ENCODE measurements at regions of chr7 and their contacts with region 1.

Region 1: DNA sequence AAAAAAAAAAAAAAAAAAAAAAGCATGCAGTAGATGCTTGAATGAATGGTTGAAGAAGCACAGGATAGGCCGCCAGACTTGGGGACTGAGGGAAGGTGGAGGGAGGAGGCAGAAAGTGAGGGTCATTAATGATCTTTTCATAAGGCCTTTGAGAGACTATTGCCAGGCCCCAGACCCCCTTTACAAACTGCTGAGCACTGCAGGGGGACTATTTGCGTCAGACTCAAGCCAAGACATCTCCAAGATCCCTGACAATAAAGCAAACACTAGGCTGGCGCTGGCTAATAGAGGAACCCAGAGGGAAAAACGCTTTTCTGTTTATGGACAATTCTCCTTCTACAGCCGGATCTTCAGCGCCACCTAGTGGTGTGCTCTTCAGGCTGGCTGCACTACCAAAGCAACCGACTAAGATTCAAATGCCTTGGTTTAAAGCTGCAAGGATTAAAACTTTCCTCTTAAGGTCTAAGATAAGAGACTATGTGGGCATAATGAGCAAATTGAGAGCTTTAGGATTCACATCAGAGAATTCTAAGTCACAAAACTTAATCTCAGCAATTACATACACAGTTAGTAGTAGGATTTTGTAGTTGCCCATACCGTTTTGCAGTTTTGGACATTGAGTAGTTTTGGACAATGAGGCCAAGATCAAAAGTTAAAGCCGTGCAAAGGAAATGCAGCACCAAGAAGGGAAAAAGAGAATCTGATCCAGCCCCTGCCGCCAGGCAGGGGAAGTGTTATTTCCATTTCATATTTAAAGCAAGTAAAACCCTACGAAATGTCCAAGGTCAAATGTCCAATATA is 17.9 kb upstream of the AGK start:
- DNase-seq: peak; percentile 55
- H3K4me3 ChIP-seq: no peak overlapping the region
- H3K27ac ChIP-seq: no peak overlapping the region
- H3K27me3 ChIP-seq: no peaks in the 10 kb centered on the region
- CTCF ChIP-seq: peak; percentile 99

Region 2: GRCh38 chr7:140810830-140811556 is 722.4 kb before region 1 on chr7:
- CTCF ChIA-PET with region 1: interaction called, 21 read pairs
- POLR2A ChIA-PET with region 1: no interaction called
- DNase-seq: peak; percentile 36
- H3K4me3 ChIP-seq: no peak overlapping the region
- H3K27ac ChIP-seq: no peak overlapping the region
- H3K27me3 ChIP-seq: no peaks in the 10 kb centered on the region
- CTCF ChIP-seq: peak; percentile 73

Region 3: GRCh38 chr7:141103847-141104429 is 429.4 kb before region 1 on chr7:
- CTCF ChIA-PET with region 1: interaction called, 11 read pairs
- POLR2A ChIA-PET with region 1: no interaction called
- DNase-seq: no peak
- H3K4me3 ChIP-seq: no peak overlapping the region
- H3K27ac ChIP-seq: no peak overlapping the region
- H3K27me3 ChIP-seq: no peaks in the 10 kb centered on the region
- CTCF ChIP-seq: no peak

Region 4: DNA sequence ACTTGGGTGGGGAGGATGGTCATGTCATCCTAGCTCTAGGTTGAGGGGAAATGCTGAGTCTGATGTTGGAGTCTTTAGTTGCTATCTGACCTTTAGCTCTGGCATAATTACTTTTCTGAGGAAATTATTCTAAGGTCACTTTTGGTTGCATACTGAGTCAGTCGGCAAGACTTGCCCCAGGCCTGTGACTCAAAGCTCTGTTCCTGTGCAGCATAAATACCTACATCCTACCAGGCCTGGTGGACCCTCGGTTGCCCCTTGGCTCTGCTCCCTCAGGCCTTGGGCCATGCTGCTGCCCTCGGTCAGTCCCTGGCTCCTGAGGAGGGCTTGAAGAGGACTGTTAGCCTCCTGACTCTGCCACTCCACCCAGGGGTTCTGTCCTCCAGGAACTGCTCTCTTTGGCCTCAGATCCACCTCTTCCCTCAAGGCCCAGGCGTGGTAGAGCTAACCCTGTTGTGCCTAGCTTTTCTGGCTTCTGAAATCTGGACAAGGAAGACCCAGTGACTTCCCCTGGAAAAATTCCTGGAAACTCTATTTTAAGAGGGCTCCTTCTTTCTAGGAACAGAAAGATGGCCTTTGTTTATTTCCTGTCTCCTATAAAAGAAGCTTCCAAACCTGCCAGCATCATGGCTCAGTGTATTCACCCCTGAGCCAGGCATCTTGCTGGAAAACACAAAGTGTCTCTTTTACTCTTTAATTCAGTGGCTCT is 388.3 kb before region 1 on chr7:
- CTCF ChIA-PET with region 1: no interaction called
- POLR2A ChIA-PET with region 1: no interaction called
- DNase-seq: no peak
- H3K4me3 ChIP-seq: no peak overlapping the region
- H3K27ac ChIP-seq: no peak overlapping the region
- H3K27me3 ChIP-seq: no peaks in the 10 kb centered on the region
- CTCF ChIP-seq: no peak

Region 5: GRCh38 chr7:141522657-141523342 is 10.5 kb before region 1 on chr7:
- CTCF ChIA-PET with region 1: interaction called, 18 read pairs
- POLR2A ChIA-PET with region 1: no interaction called
- DNase-seq: no peak
- H3K4me3 ChIP-seq: no peak overlapping the region
- H3K27ac ChIP-seq: no peak overlapping the region
- H3K27me3 ChIP-seq: no peaks in the 10 kb centered on the region
- CTCF ChIP-seq: no peak

Region 6: GRCh38 chr7:141575164-141575563 is 41.8 kb after region 1 on chr7:
- CTCF ChIA-PET with region 1: interaction called, 13 read pairs
- POLR2A ChIA-PET with region 1: no interaction called
- DNase-seq: no peak
- H3K4me3 ChIP-seq: no peak overlapping the region
- H3K27ac ChIP-seq: no peak overlapping the region
- H3K27me3 ChIP-seq: no peaks in the 10 kb centered on the region
- CTCF ChIP-seq: no peak

Region 7: DNA sequence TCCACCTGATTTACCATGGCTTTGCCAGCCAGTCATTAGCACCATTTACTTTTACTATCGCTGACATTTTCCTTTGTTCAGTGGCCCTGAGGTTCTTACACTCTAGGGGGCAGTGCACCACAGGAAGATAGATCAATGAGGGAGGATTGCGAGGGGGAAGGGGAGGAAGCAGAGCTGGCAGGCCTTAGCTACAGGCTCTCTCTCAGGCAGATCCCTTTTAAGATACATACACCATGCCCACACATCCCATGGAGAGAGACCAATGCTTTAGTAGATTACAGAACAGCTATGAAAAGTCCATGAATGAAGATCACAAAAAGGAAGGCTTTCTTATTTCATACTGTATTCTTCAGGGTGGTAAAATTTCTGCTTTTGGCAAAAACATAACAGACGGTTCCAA is 121.2 kb after region 1 on chr7:
- CTCF ChIA-PET with region 1: interaction called, 69 read pairs
- POLR2A ChIA-PET with region 1: interaction called, 4 read pairs
- DNase-seq: peak; percentile 33
- H3K4me3 ChIP-seq: no peak overlapping the region
- H3K27ac ChIP-seq: no peak overlapping the region
- H3K27me3 ChIP-seq: no peaks in the 10 kb centered on the region
- CTCF ChIP-seq: peak; percentile 84

Region 8: DNA sequence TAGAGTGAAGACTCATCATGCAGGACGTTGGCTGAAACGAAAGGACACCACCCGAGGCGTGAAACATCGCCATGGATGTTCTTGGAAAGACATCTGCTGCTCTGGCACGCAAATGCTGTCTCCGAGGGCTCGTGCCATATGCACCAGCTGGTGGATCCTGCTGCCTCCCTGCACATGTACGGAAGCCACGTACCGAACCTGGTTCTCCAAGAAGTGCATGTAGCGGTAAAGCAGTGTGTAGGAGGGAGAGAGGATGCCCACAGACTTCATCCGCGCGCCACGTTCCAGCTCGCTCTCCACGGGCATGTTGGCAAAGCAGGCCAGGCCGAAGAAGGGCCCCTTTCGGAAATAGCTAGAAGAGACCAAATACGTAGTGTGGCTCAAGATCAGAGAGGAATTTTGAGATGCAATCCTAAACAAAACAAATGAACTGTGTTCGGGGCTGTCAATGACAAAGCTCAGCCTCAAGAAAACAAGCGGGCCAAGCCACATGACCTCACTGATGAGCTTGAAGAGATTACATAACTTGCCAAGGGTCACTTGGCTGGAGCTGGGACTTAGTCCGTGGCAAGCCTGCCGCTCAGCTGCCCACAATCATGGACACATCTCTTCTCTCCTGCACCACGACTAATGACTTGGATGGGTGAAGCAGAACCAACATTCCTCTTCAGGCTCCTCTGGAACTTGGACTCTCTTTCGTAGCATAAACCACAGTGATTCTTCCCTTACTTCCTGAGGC is 152.1 kb after region 1 on chr7:
- CTCF ChIA-PET with region 1: no interaction called
- POLR2A ChIA-PET with region 1: no interaction called
- DNase-seq: no peak
- H3K4me3 ChIP-seq: no peak overlapping the region
- H3K27ac ChIP-seq: no peak overlapping the region
- H3K27me3 ChIP-seq: no peaks in the 10 kb centered on the region
- CTCF ChIP-seq: no peak

Region 9: DNA sequence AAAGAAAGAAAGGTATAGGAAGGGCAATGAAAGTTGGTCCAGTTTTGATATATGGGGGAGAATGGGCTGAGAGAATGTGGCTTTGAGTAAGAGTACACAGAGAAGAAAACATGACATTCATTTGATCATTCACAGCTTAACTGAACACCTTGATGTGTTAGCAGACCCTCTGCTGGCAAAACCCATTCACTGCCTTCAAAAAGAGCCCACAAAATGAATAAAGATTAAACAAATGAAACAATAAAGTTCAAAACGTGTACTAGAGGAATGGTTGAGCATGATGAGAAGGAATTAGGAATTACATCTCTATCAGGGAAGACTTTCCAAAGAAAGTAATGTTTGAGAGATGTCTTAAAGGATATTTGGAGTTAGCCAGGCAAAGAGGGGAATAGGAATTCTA is 177.0 kb after region 1 on chr7:
- CTCF ChIA-PET with region 1: no interaction called
- POLR2A ChIA-PET with region 1: no interaction called
- DNase-seq: no peak
- H3K4me3 ChIP-seq: no peak overlapping the region
- H3K27ac ChIP-seq: no peak overlapping the region
- H3K27me3 ChIP-seq: no peaks in the 10 kb centered on the region
- CTCF ChIP-seq: no peak

Measured in AG04450 (cell line).